ENCODE measurements at regions of chr2 and their contacts with region 1.

Region 1: GRCh38 chr2:178796079-178796677 is 11.0 kb downstream of the TTN start:
- DNase-seq: no peak
- H3K4me3 Mint-ChIP-seq: no peak overlapping the region
- H3K27ac Mint-ChIP-seq: no peak overlapping the region
- H3K4me1 Mint-ChIP-seq: no peaks in the 10 kb centered on the region
- H3K27me3 Mint-ChIP-seq: no peaks in the 10 kb centered on the region

Region 2: GRCh38 chr2:178767094-178768060 is 28.8 kb before region 1 on chr2:
- intact Hi-C with region 1: no loop called
- DNase-seq: no peak
- H3K4me3 Mint-ChIP-seq: no peak overlapping the region
- H3K27ac Mint-ChIP-seq: no peak overlapping the region
- H3K4me1 Mint-ChIP-seq: no peaks in the 10 kb centered on the region
- H3K27me3 Mint-ChIP-seq: peaks cover 2% of the 10 kb centered on the region

Region 3: DNA sequence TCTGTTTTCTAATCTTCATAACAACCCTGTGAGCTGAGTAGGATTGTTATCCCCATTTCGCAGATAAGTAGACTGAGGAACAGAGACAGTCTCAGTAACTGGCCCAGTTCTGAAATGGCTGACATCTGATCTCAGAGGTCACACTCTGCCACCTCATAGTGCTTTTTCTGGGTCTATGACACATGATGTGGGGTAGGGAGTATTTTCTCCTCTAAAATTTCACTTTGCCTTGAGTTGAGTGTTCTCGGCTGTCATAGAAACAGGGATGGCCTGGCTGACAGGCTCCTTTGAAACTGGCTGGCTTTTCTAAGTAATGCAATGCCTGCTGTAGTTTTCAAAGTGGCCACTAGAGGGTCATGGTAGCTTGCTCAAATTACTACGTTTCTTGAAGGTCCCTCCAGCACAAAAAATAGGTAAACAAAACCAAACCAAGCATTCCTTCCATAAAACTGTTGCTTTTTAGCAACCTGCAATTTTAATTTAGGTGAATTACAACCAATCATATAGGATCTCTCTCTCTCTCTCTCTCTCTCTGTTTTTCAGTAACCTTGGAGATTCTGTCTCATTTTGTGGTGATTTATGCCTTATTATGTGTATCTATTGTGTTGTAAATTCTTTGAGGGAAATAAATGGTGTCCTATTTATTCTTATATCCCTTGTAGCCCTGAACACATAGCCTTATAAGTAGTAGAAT is 95.2 kb after region 1 on chr2:
- intact Hi-C with region 1: loop called (anchors 1 kb)
- DNase-seq: peak; percentile 45
- H3K4me3 Mint-ChIP-seq: no peak overlapping the region
- H3K27ac Mint-ChIP-seq: no peak overlapping the region
- H3K4me1 Mint-ChIP-seq: no peaks in the 10 kb centered on the region
- H3K27me3 Mint-ChIP-seq: peaks cover 2% of the 10 kb centered on the region

Region 4: GRCh38 chr2:178914259-178914849 is 118.2 kb after region 1 on chr2:
- intact Hi-C with region 1: loop called (anchors 1 kb)
- DNase-seq: peak; percentile 54
- H3K4me3 Mint-ChIP-seq: no peak overlapping the region
- H3K27ac Mint-ChIP-seq: no peak overlapping the region
- H3K4me1 Mint-ChIP-seq: no peaks in the 10 kb centered on the region
- H3K27me3 Mint-ChIP-seq: no peaks in the 10 kb centered on the region

Region 5: GRCh38 chr2:179129574-179130238 is 333.5 kb after region 1 on chr2:
- intact Hi-C with region 1: loop called (anchors 1 kb)
- DNase-seq: no peak
- H3K4me3 Mint-ChIP-seq: no peak overlapping the region
- H3K27ac Mint-ChIP-seq: no peak overlapping the region
- H3K4me1 Mint-ChIP-seq: no peaks in the 10 kb centered on the region
- H3K27me3 Mint-ChIP-seq: no peaks in the 10 kb centered on the region

Region 6: GRCh38 chr2:179218848-179219594 is 422.8 kb after region 1 on chr2:
- intact Hi-C with region 1: loop called (anchors 2 kb)
- DNase-seq: peak; percentile 21
- H3K4me3 Mint-ChIP-seq: no peak overlapping the region
- H3K27ac Mint-ChIP-seq: no peak overlapping the region
- H3K4me1 Mint-ChIP-seq: no peaks in the 10 kb centered on the region
- H3K27me3 Mint-ChIP-seq: no peaks in the 10 kb centered on the region

Region 7: DNA sequence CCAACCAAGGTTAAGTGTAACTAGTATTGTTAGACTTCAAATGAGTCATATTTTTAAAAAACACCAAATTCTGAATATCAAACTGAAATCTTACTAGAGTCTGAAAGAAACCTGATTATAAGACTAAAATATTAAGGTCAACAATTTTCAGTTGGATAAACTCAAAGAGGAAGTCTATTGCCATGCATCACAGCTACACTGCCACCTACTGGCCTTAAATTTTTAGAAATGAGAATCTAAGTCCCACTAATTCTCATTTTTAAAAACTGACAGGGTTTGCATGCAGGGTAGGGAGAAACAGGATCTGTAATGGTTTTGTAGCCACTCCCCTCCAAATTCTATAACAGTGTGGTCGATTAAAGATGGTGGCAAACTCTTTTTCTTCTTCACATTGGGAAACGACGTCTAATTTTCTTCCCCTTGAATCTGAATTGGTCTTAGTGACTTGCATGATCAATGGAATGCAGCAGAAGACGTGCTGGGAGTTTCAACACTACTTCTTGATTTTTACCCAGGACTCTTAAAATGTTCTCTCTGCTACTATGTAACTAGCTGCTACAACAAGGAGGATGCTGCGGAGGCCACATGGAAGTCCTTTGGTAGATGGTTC is 644.6 kb after region 1 on chr2:
- intact Hi-C with region 1: loop called (anchors 1 kb)
- DNase-seq: no peak
- H3K4me3 Mint-ChIP-seq: no peak overlapping the region
- H3K27ac Mint-ChIP-seq: no peak overlapping the region
- H3K4me1 Mint-ChIP-seq: no peaks in the 10 kb centered on the region
- H3K27me3 Mint-ChIP-seq: peaks cover 15% of the 10 kb centered on the region

Region 8: DNA sequence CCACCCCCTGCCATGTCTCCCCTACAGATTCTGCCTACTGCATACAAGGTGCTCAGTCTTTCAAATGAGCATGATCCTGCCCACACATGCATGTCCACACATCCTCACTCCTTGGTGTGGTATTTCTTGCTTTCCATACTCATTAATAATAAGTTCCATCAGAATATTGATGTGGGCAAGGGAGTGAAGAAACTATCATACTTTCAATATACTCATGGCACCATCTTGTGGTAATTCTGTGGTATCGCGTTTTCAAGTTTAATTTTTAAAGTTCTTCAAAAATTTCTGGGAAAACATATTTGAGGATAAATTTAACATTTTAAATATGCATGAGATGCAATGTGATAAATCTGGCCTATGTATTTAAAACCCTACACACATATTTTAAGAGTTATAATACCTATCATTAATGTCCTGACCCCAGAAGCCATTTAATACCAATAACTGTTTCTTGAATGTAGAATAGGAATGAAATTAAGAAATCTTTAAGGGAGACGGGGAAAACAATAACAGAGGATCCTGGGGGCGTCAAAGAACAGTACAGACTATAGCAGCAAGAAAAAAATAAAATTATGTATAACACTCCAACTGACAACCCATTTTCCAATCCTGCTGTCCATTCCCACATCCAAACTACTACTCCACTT is 955.1 kb after region 1 on chr2:
- intact Hi-C with region 1: loop called (anchors 1 kb)
- DNase-seq: no peak
- H3K4me3 Mint-ChIP-seq: no peak overlapping the region
- H3K27ac Mint-ChIP-seq: no peak overlapping the region
- H3K4me1 Mint-ChIP-seq: no peaks in the 10 kb centered on the region
- H3K27me3 Mint-ChIP-seq: peaks cover 10% of the 10 kb centered on the region

Measured in activated T-helper 1 cell treated with anti-CD3 and anti-CD28 coated beads, Interleukin-12 subunit alpha, Interleukin-12 subunit beta, Interleukin-2, Interleukin-4 antibody, amounts not matched to agents 30 ng/mL and 10 ng/mL and 1 ng/mL, durations not matched to agents 14 hours and 24 hours and 36 hours (primary cell).